WTC11 (cell line): ENCODE measurements at regions of chr22 and their contacts with region 1.

Region 1: DNA sequence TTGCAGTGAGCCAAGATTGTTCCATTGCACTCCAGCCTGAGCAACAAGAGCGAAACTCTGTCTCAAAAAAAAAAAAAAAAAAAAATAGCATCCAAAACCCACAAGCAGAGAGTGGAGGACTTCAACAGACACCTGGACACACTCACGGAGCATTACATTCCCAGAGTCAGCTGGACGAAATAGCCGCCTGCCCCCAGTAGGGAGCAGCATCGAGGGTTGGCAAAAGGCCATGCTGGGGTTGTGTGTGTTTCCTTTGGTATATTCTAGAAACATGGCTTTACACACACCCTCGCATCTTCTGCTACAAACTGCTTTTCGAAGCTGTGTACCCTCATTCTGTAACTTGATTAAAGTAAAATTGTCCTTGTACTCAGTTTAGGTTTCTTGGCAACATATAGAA is 5.3 kb downstream of the ADA2 start:
- DNase-seq: peak; percentile 72
- ATAC-seq: peak; percentile 70
- H3K4me3 Mint-ChIP-seq: no peak overlapping the region
- H3K27ac Mint-ChIP-seq: no peak overlapping the region
- H3K4me1 Mint-ChIP-seq: peaks cover 41% of the 10 kb centered on the region
- H3K27me3 Mint-ChIP-seq: no peaks in the 10 kb centered on the region; the same call in 1 of the 2 replicates
- CTCF ChIP-seq: peak; percentile 31; the same call in 1 of the 2 replicates

Region 2: DNA sequence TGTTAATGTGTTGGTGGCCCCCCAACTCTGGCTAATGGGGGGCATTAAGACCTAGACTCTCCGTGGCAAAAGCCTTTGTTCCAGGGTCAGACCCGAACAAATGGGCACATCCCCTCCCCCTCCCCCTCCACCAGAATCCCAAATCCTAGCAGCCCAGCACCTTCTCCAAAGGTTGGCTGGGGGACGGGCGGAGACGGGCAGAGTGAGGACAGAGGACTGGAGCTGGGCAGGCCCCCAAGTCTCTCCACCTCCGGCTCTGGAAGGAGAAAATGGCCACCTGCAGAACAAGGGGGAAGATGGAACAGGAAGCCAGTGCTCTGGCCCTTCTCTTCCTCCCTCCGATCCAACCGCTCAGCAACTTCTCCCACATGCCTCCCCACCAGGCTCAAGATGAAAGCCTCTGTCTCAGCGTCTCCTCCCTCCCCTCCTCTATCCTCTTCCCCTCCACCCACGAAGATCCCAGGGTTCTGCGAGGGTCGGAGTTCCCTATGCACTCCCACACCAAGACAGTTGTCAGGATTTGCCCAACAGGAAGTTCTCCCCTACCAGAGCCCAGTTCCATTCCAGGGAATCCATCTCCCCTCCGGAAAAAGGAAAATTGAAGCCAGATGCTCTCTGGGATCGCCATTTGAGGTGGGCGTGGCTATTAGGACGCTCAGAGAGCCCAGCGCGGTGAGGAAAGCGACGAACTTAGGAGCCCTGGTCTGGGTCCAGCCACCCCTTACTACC is 14.8 kb before region 1 on chr22:
- CTCF ChIA-PET with region 1: interaction called, 20 read pairs
- POLR2A ChIA-PET with region 1: interaction called, 3 read pairs
- DNase-seq: peak; percentile 64
- ATAC-seq: peak; percentile 59
- H3K4me3 Mint-ChIP-seq: peak overlapping the region; percentile 61
- H3K27ac Mint-ChIP-seq: peak overlapping the region; percentile 89
- H3K4me1 Mint-ChIP-seq: peaks cover 69% of the 10 kb centered on the region
- H3K27me3 Mint-ChIP-seq: peaks cover 7% of the 10 kb centered on the region; the same call in 1 of the 2 replicates
- CTCF ChIP-seq: no peak

Region 3: GRCh38 chr22:17258015-17258787 is 44.2 kb after region 1 on chr22:
- CTCF ChIA-PET with region 1: interaction called, 12 read pairs
- POLR2A ChIA-PET with region 1: no interaction called
- DNase-seq: peak; percentile 76
- ATAC-seq: peak; percentile 67
- H3K4me3 Mint-ChIP-seq: peak overlapping the region; percentile 55
- H3K27ac Mint-ChIP-seq: peak overlapping the region; percentile 100
- H3K4me1 Mint-ChIP-seq: peaks cover 74% of the 10 kb centered on the region
- H3K27me3 Mint-ChIP-seq: no peaks in the 10 kb centered on the region
- CTCF ChIP-seq: no peak

Region 4: DNA sequence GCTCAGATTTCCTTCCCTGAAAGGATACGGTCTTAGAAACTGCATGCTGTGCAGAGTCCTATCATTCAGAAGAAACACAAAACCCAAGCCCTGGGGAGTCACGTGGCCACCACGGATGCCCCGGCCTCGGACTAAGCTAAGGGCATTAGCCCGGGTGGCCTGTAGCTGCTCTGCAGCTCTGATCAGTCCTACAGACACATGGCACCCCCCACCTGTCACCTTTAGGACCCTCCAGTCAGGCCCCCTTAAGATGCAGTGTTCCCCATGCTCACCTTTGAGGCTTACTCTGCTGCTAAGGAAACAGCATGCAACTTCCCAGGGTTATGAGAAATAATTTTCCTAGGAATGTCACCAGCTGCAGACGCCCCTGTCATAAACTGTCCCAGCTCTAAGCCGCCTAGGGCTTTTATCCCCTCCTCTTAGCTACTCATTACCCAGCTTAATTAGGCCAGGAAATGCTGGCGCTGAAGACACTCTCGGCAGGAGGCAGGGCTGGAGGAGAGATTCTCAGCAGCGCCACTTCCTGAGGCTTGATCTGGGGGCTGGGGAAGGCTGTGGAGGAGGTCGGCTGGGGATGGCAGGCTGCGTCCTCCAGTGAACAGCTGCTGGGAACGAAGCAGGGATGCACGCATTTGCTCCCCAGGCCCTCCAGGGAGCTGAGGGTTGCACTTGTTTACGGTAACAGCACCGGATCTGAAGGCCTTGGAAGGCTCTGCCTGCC is 52.4 kb after region 1 on chr22:
- CTCF ChIA-PET with region 1: interaction called, 12 read pairs
- POLR2A ChIA-PET with region 1: no interaction called
- DNase-seq: peak; percentile 81
- ATAC-seq: peak; percentile 66
- H3K4me3 Mint-ChIP-seq: peak overlapping the region; percentile 69
- H3K27ac Mint-ChIP-seq: peak overlapping the region; percentile 96
- H3K4me1 Mint-ChIP-seq: peaks cover 90% of the 10 kb centered on the region
- H3K27me3 Mint-ChIP-seq: no peaks in the 10 kb centered on the region
- CTCF ChIP-seq: no peak